ENCODE measurements at regions of chr12 and their contacts with region 1.

Region 1: GRCh38 chr12:53441040-53441833 is at the start of gene PRR13:
- DNase-seq: peak; percentile 90 to 99 (median 96)
- ATAC-seq: peak; percentile 99
- H3K4me3 ChIP-seq: peak within 1 kb of the TSS; percentile 93
- H3K4me3 Mint-ChIP-seq: peak within 1 kb of the TSS; percentile 89 to 99 (median 96)
- H3K27ac ChIP-seq: peak within 1 kb of the TSS; percentile 92
- H3K27ac Mint-ChIP-seq: peak within 1 kb of the TSS; percentile 91 to 97 (median 97)
- H3K4me1 ChIP-seq: peaks cover 18 to 24% of the 10 kb centered on the region in 2 donors
- H3K4me1 Mint-ChIP-seq: peaks cover 30 to 52% (median 43%) of the 10 kb centered on the region in 7 donors
- H3K27me3 ChIP-seq: no peaks in the 10 kb centered on the region
- H3K27me3 Mint-ChIP-seq: no peaks in the 10 kb centered on the region
- total RNA-seq, gene PRR13: 147 to 215 (median 201) TPM

Region 2: GRCh38 chr12:53352331-53353256 is 88.6 kb before region 1 on chr12:
- CTCF ChIA-PET with region 1: no interaction called
- POLR2A ChIA-PET with region 1: interaction called, 4 read pairs
- intact Hi-C with region 1: loop called in 1 of 2 experiments (anchors 1 kb)
- DNase-seq: peak; percentile 58 to 87 (median 82)
- ATAC-seq: peak; percentile 99
- H3K4me3 ChIP-seq: no peak overlapping the region
- H3K4me3 Mint-ChIP-seq: peak overlapping the region in 2 of 10 donors; percentile 14 to 32
- H3K27ac ChIP-seq: no peak overlapping the region
- H3K27ac Mint-ChIP-seq: peak overlapping the region in 6 of 9 donors; percentile 4 to 52 (median 12)
- H3K4me1 ChIP-seq: peaks cover 0 to 3% of the 10 kb centered on the region in 2 donors
- H3K4me1 Mint-ChIP-seq: peaks cover 5 to 13% (median 6%) of the 10 kb centered on the region in 7 donors
- H3K27me3 ChIP-seq: no peaks in the 10 kb centered on the region
- H3K27me3 Mint-ChIP-seq: no peaks in the 10 kb centered on the region

Region 3: DNA sequence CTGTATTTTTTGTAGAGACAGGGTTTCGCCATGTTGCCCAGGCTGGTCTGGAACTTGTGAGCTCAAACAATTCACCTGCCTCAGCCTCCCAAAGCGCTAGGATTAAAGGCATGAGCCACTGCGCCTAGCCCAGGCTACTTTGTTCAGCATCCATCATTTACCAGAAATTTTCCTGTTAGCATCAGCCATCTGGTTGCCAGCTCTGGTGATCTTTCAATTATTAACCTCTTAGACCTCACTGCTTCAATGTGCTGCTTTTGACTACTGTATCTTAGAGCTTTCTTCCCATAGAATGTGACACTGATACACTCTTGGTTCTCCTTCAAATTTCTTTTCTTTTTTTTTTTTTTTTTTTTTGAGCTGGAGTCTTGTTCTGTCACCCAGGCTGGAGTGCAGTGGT is 23.0 kb before region 1 on chr12:
- CTCF ChIA-PET with region 1: interaction called, 3 read pairs
- POLR2A ChIA-PET with region 1: interaction called, 6 read pairs
- intact Hi-C with region 1: loop called in 1 of 2 experiments (anchors 2 kb)
- DNase-seq: no peak
- ATAC-seq: no peak
- H3K4me3 ChIP-seq: no peak overlapping the region
- H3K4me3 Mint-ChIP-seq: peak overlapping the region in 2 of 10 donors; percentile 14 to 55
- H3K27ac ChIP-seq: no peak overlapping the region
- H3K27ac Mint-ChIP-seq: peak overlapping the region in 6 of 9 donors; percentile 23 to 72 (median 30)
- H3K4me1 ChIP-seq: peaks cover 4 to 7% of the 10 kb centered on the region in 2 donors
- H3K4me1 Mint-ChIP-seq: peaks cover 16 to 64% (median 54%) of the 10 kb centered on the region in 7 donors
- H3K27me3 ChIP-seq: no peaks in the 10 kb centered on the region
- H3K27me3 Mint-ChIP-seq: no peaks in the 10 kb centered on the region

Region 4: GRCh38 chr12:53456654-53457366 is 15.6 kb after region 1 on chr12:
- CTCF ChIA-PET with region 1: no interaction called
- POLR2A ChIA-PET with region 1: interaction called, 15 read pairs
- intact Hi-C with region 1: loop called in 1 of 2 experiments (anchors 2 kb)
- DNase-seq: no peak
- ATAC-seq: no peak
- H3K4me3 ChIP-seq: no peak overlapping the region
- H3K4me3 Mint-ChIP-seq: no peak overlapping the region
- H3K27ac ChIP-seq: no peak overlapping the region
- H3K27ac Mint-ChIP-seq: no peak overlapping the region
- H3K4me1 ChIP-seq: peaks cover 16 to 22% of the 10 kb centered on the region in 2 donors
- H3K4me1 Mint-ChIP-seq: peaks cover 29 to 59% (median 51%) of the 10 kb centered on the region in 7 donors
- H3K27me3 ChIP-seq: no peaks in the 10 kb centered on the region
- H3K27me3 Mint-ChIP-seq: no peaks in the 10 kb centered on the region

Region 5: GRCh38 chr12:53500776-53501614 is 59.8 kb after region 1 on chr12 and contains the start of gene TARBP2:
- CTCF ChIA-PET with region 1: no interaction called
- POLR2A ChIA-PET with region 1: interaction called, 14 read pairs
- intact Hi-C with region 1: loop called (anchors 1 kb)
- DNase-seq: peak; percentile 87 to 99 (median 98)
- ATAC-seq: peak; percentile 87
- H3K4me3 ChIP-seq: peak within 1 kb of the TSS; percentile 84
- H3K4me3 Mint-ChIP-seq: peak within 1 kb of the TSS; percentile 86 to 96 (median 92)
- H3K27ac ChIP-seq: peak within 1 kb of the TSS; percentile 98
- H3K27ac Mint-ChIP-seq: peak within 1 kb of the TSS; percentile 87 to 100 (median 97)
- H3K4me1 ChIP-seq: peaks cover 24 to 27% of the 10 kb centered on the region in 2 donors
- H3K4me1 Mint-ChIP-seq: peaks cover 15 to 56% (median 43%) of the 10 kb centered on the region in 7 donors
- H3K27me3 ChIP-seq: no peaks in the 10 kb centered on the region
- H3K27me3 Mint-ChIP-seq: no peaks in the 10 kb centered on the region
- total RNA-seq, gene TARBP2: 25.1 to 45.2 (median 40.7) TPM

Region 6: GRCh38 chr12:53508534-53509199 is 67.4 kb after region 1 on chr12:
- CTCF ChIA-PET with region 1: no interaction called
- POLR2A ChIA-PET with region 1: interaction called, 3 read pairs
- intact Hi-C with region 1: loop called in 1 of 2 experiments (anchors 1 kb)
- DNase-seq: peak; percentile 63 to 82 (median 73)
- ATAC-seq: peak; percentile 98
- H3K4me3 ChIP-seq: no peak overlapping the region
- H3K4me3 Mint-ChIP-seq: peak overlapping the region in 1 of 10 donors; percentile 39
- H3K27ac ChIP-seq: peak overlapping the region; percentile 39
- H3K27ac Mint-ChIP-seq: peak overlapping the region in 8 of 9 donors; percentile 13 to 80 (median 66)
- H3K4me1 ChIP-seq: peaks cover 6 to 7% of the 10 kb centered on the region in 2 donors
- H3K4me1 Mint-ChIP-seq: peaks cover 5 to 17% (median 9%) of the 10 kb centered on the region in 7 donors
- H3K27me3 ChIP-seq: no peaks in the 10 kb centered on the region
- H3K27me3 Mint-ChIP-seq: no peaks in the 10 kb centered on the region

Region 7: GRCh38 chr12:53625946-53626701 is 184.9 kb after region 1 on chr12 and contains the start of gene ATF7:
- CTCF ChIA-PET with region 1: no interaction called
- POLR2A ChIA-PET with region 1: no interaction called
- intact Hi-C with region 1: loop called in 1 of 2 experiments (anchors 1 kb)
- DNase-seq: peak; percentile 95 to 100 (median 99)
- ATAC-seq: peak; percentile 97
- H3K4me3 ChIP-seq: peak within 1 kb of the TSS; percentile 92
- H3K4me3 Mint-ChIP-seq: peak within 1 kb of the TSS; percentile 97 to 100 (median 98)
- H3K27ac ChIP-seq: peak within 1 kb of the TSS; percentile 83
- H3K27ac Mint-ChIP-seq: peak within 1 kb of the TSS; percentile 95 to 99 (median 97)
- H3K4me1 ChIP-seq: peaks cover 20 to 32% of the 10 kb centered on the region in 2 donors
- H3K4me1 Mint-ChIP-seq: peaks cover 30 to 55% (median 49%) of the 10 kb centered on the region in 7 donors
- H3K27me3 ChIP-seq: no peaks in the 10 kb centered on the region
- H3K27me3 Mint-ChIP-seq: peaks cover 0 to 6% (median 0%) of the 10 kb centered on the region in 5 donors
- total RNA-seq, gene ATF7: 21.9 to 39.5 (median 30.9) TPM